CD8-positive, alpha-beta memory T cell (primary cell): ENCODE measurements at regions of chr10 and their contacts with region 1.

Region 1: DNA sequence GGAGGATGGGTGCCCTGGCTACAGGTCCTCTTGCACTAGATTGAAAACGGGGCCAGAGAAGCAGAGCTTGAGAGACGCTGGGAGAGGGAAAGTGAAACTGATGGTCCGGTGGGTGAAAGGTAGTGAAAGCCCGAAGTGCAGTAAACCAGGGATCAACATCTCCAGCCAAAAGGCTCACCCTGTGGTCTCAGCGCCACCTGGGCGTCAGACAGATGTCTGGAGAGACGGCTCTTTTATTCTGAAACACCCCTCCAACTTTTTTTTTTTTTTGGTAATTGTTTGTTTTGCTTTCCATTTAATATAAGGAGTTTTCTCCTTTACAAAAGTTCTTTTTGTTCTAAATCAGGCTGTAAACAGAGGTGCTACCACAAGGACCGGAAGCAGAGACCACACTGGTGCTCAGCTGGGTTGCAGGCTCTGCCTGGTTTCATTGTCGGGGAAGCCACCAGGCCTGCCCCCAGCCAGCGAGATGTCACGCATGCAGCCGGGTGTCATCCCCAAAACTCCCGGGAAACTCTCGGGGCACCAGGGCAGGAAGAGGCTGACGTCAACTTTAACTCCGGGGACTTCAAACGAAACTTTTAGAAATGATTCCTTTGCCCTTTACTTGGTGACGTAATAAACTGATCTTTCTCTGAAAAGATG is 11.2 kb downstream of the IL2RA start:
- DNase-seq: peak; percentile 85 to 96 (median 92)
- H3K4me3 ChIP-seq: peak overlapping the region; percentile 80
- H3K4me3 Mint-ChIP-seq: peak overlapping the region; percentile 85 to 98 (median 95)
- H3K27ac ChIP-seq: peak overlapping the region; percentile 66
- H3K27ac Mint-ChIP-seq: peak overlapping the region; percentile 95 to 99 (median 98)
- H3K4me1 ChIP-seq: peaks cover 73% of the 10 kb centered on the region
- H3K4me1 Mint-ChIP-seq: peaks cover 74 to 90% (median 76%) of the 10 kb centered on the region in 3 donors
- H3K27me3 ChIP-seq: no peaks in the 10 kb centered on the region
- H3K27me3 Mint-ChIP-seq: peaks cover 0 to 2% of the 10 kb centered on the region in 2 donors

Region 2: GRCh38 chr10:5977471-5978229 is 73.3 kb before region 1 on chr10 and contains the start of gene IL15RA:
- CTCF ChIA-PET with region 1: interaction called, 10 read pairs
- POLR2A ChIA-PET with region 1: interaction called, 6 read pairs
- DNase-seq: peak; percentile 74 to 92 (median 80)
- H3K4me3 ChIP-seq: peak within 1 kb of the TSS; percentile 86
- H3K4me3 Mint-ChIP-seq: peak within 1 kb of the TSS; percentile 96 to 99 (median 98)
- H3K27ac ChIP-seq: peak within 1 kb of the TSS; percentile 89
- H3K27ac Mint-ChIP-seq: peak within 1 kb of the TSS; percentile 91 to 98 (median 96)
- H3K4me1 ChIP-seq: peaks cover 16% of the 10 kb centered on the region
- H3K4me1 Mint-ChIP-seq: peaks cover 24 to 45% (median 40%) of the 10 kb centered on the region in 3 donors
- H3K27me3 ChIP-seq: no peaks in the 10 kb centered on the region
- H3K27me3 Mint-ChIP-seq: no peaks in the 10 kb centered on the region
- total RNA-seq, gene IL15RA: 30.1 to 33.5 TPM

Region 3: DNA sequence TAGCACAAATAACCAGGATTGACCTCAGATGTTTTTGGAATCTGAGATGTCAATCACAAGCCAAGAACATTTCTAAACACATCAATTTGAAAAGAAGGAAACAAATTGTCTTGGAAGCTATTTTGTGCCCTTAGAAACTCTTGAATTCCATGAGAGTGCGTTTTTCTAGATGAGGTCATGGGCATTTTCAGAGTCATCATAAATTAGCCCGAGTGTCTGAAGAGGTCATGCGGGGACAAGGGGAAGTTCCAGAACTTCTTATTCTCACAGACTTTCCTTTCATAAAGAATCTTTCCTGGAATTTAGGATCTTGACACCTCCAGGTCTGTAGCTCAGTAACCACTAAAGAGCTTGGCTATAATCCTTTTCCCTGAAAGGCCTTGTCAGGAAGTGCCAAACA is 17.0 kb before region 1 on chr10:
- CTCF ChIA-PET with region 1: interaction called, 37 read pairs
- POLR2A ChIA-PET with region 1: interaction called, 20 read pairs
- DNase-seq: no peak
- H3K4me3 ChIP-seq: no peak overlapping the region
- H3K4me3 Mint-ChIP-seq: no peak overlapping the region
- H3K27ac ChIP-seq: peak overlapping the region; percentile 46
- H3K27ac Mint-ChIP-seq: no peak overlapping the region
- H3K4me1 ChIP-seq: peaks cover 32% of the 10 kb centered on the region
- H3K4me1 Mint-ChIP-seq: peaks cover 33 to 42% (median 39%) of the 10 kb centered on the region in 3 donors
- H3K27me3 ChIP-seq: no peaks in the 10 kb centered on the region
- H3K27me3 Mint-ChIP-seq: no peaks in the 10 kb centered on the region

Region 4: DNA sequence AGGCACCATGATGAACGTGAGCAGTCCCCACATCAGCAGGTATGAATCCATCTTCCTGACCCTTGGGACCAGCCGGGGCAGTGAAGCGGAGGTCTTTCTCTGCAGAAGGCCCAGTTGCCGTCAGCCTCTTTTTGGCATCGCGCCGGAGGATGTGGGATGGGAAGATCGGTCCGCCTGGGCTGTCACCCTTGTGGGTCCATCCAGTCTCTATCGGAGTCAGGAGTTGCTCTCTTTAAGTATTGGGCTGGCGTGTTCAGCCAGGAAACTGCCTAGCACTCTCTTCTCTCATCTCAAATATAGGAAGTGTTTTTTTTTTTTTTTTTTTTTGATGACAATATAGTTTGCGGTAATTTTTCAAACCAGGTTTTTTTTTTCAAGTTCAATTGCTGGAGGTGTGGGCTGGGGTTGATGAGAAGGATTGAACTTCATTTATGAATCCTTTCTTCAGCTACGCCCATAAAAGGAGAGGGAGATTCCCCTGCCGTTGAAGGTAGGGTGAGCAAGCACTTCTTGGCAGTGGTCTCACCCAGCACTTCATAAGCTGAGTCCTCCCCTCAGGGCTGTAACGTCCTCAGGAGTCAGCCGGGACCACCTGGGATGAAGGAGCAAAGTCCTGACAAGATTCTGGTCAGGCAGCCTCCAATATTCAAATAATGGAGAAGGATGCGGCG is 11.3 kb after region 1 on chr10 and contains the start of gene IL2RA:
- CTCF ChIA-PET with region 1: interaction called, 8 read pairs
- POLR2A ChIA-PET with region 1: interaction called, 16 read pairs
- DNase-seq: peak; percentile 30 to 73 (median 65)
- H3K4me3 ChIP-seq: peak within 1 kb of the TSS; percentile 66
- H3K4me3 Mint-ChIP-seq: peak within 1 kb of the TSS; percentile 90 to 94 (median 92)
- H3K27ac ChIP-seq: peak within 1 kb of the TSS; percentile 32
- H3K27ac Mint-ChIP-seq: peak within 1 kb of the TSS; percentile 41 to 94 (median 88)
- H3K4me1 ChIP-seq: peaks cover 50% of the 10 kb centered on the region
- H3K4me1 Mint-ChIP-seq: peaks cover 47 to 81% (median 78%) of the 10 kb centered on the region in 3 donors
- H3K27me3 ChIP-seq: no peaks in the 10 kb centered on the region
- H3K27me3 Mint-ChIP-seq: peaks cover 0 to 8% of the 10 kb centered on the region in 2 donors
- total RNA-seq, gene IL2RA: 1,178 to 1,224 TPM

Region 5: GRCh38 chr10:6819301-6819700 is 768.4 kb after region 1 on chr10:
- CTCF ChIA-PET with region 1: no interaction called
- POLR2A ChIA-PET with region 1: no interaction called
- DNase-seq: no peak
- H3K4me3 ChIP-seq: no peak overlapping the region
- H3K4me3 Mint-ChIP-seq: no peak overlapping the region
- H3K27ac ChIP-seq: no peak overlapping the region
- H3K27ac Mint-ChIP-seq: no peak overlapping the region
- H3K4me1 ChIP-seq: no peaks in the 10 kb centered on the region
- H3K4me1 Mint-ChIP-seq: no peaks in the 10 kb centered on the region
- H3K27me3 ChIP-seq: no peaks in the 10 kb centered on the region
- H3K27me3 Mint-ChIP-seq: peaks cover 9 to 29% of the 10 kb centered on the region in 2 donors